Activated CD4-positive, alpha-beta T cell treated with anti-CD3 and anti-CD28 coated beads for 36 hours (primary cell): ENCODE measurements at regions of chr17 and their contacts with region 1.

Region 1: GRCh38 chr17:78745407-78746088 is 36.5 kb downstream of the CYTH1 start:
- DNase-seq: peak; percentile 71
- ATAC-seq: no peak
- H3K4me3 Mint-ChIP-seq: peak overlapping the region; percentile 7
- H3K27ac Mint-ChIP-seq: peak overlapping the region; percentile 94
- H3K4me1 Mint-ChIP-seq: peaks cover 94% of the 10 kb centered on the region
- H3K27me3 Mint-ChIP-seq: no peaks in the 10 kb centered on the region

Region 2: GRCh38 chr17:77444984-77445759 is 1300.4 kb before region 1 on chr17:
- CTCF ChIA-PET with region 1: no interaction called
- POLR2A ChIA-PET with region 1: no interaction called
- intact Hi-C with region 1: loop called in 1 of 2 experiments (anchors 10 kb)
- DNase-seq: peak; percentile 90
- ATAC-seq: peak; percentile 52
- H3K4me3 Mint-ChIP-seq: peak overlapping the region; percentile 62
- H3K27ac Mint-ChIP-seq: peak overlapping the region; percentile 95
- H3K4me1 Mint-ChIP-seq: peaks cover 97% of the 10 kb centered on the region
- H3K27me3 Mint-ChIP-seq: no peaks in the 10 kb centered on the region

Region 3: DNA sequence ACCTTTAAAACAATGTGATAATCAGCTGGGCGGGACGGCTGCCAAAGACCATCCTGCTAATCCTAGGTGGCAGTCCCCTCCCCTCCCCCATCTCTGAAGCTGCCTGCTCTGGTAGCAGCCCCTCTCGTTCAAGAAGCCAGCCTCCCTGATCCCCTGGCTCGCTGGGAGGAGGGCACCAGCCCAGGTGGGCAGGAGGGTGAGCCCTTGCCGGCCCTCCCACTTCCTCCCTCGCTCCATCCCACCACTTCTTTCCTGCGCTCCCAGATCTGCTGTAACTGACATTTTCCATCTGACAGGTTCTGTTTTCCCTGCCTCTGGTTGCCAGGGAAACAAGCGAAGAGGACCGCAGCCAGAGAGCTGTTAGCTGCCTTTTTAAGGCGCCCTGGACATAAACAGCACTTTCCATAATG is 942.7 kb before region 1 on chr17:
- CTCF ChIA-PET with region 1: no interaction called
- POLR2A ChIA-PET with region 1: no interaction called
- intact Hi-C with region 1: no loop called
- DNase-seq: no peak
- ATAC-seq: no peak
- H3K4me3 Mint-ChIP-seq: no peak overlapping the region
- H3K27ac Mint-ChIP-seq: no peak overlapping the region
- H3K4me1 Mint-ChIP-seq: peaks cover 3% of the 10 kb centered on the region
- H3K27me3 Mint-ChIP-seq: peaks cover 11% of the 10 kb centered on the region

Region 4: GRCh38 chr17:78366109-78366848 is 379.3 kb before region 1 on chr17:
- CTCF ChIA-PET with region 1: no interaction called
- POLR2A ChIA-PET with region 1: no interaction called
- intact Hi-C with region 1: no loop called
- DNase-seq: no peak
- ATAC-seq: no peak
- H3K4me3 Mint-ChIP-seq: no peak overlapping the region
- H3K27ac Mint-ChIP-seq: no peak overlapping the region
- H3K4me1 Mint-ChIP-seq: peaks cover 25% of the 10 kb centered on the region
- H3K27me3 Mint-ChIP-seq: peaks cover 3% of the 10 kb centered on the region

Region 5: GRCh38 chr17:78497115-78497540 is 248.4 kb before region 1 on chr17:
- CTCF ChIA-PET with region 1: interaction called, 3 read pairs
- POLR2A ChIA-PET with region 1: no interaction called
- intact Hi-C with region 1: loop called in 1 of 2 experiments (anchors 1 kb)
- DNase-seq: peak; percentile 76
- ATAC-seq: peak; percentile 79
- H3K4me3 Mint-ChIP-seq: no peak overlapping the region
- H3K27ac Mint-ChIP-seq: no peak overlapping the region
- H3K4me1 Mint-ChIP-seq: no peaks in the 10 kb centered on the region
- H3K27me3 Mint-ChIP-seq: no peaks in the 10 kb centered on the region

Region 6: DNA sequence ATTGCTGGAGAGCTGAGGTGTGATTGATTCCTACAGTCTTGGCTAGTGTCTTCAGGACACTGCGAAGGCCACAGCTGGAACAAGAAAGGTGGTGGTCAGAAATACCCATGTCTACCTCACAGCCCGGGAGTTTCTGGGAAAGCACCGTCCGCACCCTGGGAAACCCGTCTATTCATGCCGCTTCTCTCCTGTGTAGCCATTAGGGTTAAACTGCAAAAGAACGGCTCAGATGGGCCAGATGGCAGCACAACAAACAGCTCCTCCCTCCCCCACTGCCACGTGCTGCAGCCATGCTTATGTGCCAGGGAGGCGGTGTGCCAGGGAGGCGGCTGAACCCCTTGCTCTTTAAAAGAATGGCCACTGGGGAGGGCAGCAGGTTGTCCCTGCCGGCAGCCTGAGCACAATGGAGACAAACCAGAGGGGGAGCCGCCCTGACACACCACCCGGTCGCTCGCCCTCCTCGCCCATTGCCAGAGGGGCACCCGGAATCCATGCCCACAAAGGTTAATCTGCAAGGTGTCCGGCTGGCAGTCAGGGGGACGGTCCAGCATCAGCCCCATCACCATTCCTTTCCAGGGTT is 28.6 kb before region 1 on chr17:
- CTCF ChIA-PET with region 1: interaction called, 25 read pairs
- POLR2A ChIA-PET with region 1: interaction called, 3 read pairs
- intact Hi-C with region 1: loop called in 1 of 2 experiments (anchors 1 kb)
- DNase-seq: peak; percentile 67
- ATAC-seq: peak; percentile 17
- H3K4me3 Mint-ChIP-seq: peak overlapping the region; percentile 43
- H3K27ac Mint-ChIP-seq: peak overlapping the region; percentile 83
- H3K4me1 Mint-ChIP-seq: peaks cover 90% of the 10 kb centered on the region
- H3K27me3 Mint-ChIP-seq: no peaks in the 10 kb centered on the region

Region 7: GRCh38 chr17:78759203-78759968 is 13.8 kb after region 1 on chr17:
- CTCF ChIA-PET with region 1: interaction called, 27 read pairs
- POLR2A ChIA-PET with region 1: interaction called, 18 read pairs
- intact Hi-C with region 1: loop called (anchors 1 kb)
- DNase-seq: peak; percentile 86
- ATAC-seq: peak; percentile 65
- H3K4me3 Mint-ChIP-seq: peak overlapping the region; percentile 60
- H3K27ac Mint-ChIP-seq: peak overlapping the region; percentile 99
- H3K4me1 Mint-ChIP-seq: peaks cover 85% of the 10 kb centered on the region
- H3K27me3 Mint-ChIP-seq: no peaks in the 10 kb centered on the region

Region 8: GRCh38 chr17:78774956-78775571 is 29.5 kb after region 1 on chr17:
- CTCF ChIA-PET with region 1: interaction called, 14 read pairs
- POLR2A ChIA-PET with region 1: interaction called, 22 read pairs
- intact Hi-C with region 1: loop called (anchors 1 kb)
- DNase-seq: peak; percentile 86
- ATAC-seq: peak; percentile 67
- H3K4me3 Mint-ChIP-seq: peak overlapping the region; percentile 84
- H3K27ac Mint-ChIP-seq: peak overlapping the region; percentile 100
- H3K4me1 Mint-ChIP-seq: peaks cover 68% of the 10 kb centered on the region
- H3K27me3 Mint-ChIP-seq: no peaks in the 10 kb centered on the region

Region 9: GRCh38 chr17:78805301-78805700 is 59.8 kb after region 1 on chr17:
- CTCF ChIA-PET with region 1: interaction called, 3 read pairs
- POLR2A ChIA-PET with region 1: interaction called, 10 read pairs
- intact Hi-C with region 1: loop called in 1 of 2 experiments (anchors 1 kb)
- DNase-seq: peak; percentile 91
- ATAC-seq: peak; percentile 94
- H3K4me3 Mint-ChIP-seq: peak overlapping the region; percentile 41
- H3K27ac Mint-ChIP-seq: peak overlapping the region; percentile 95
- H3K4me1 Mint-ChIP-seq: peaks cover 57% of the 10 kb centered on the region
- H3K27me3 Mint-ChIP-seq: no peaks in the 10 kb centered on the region